HCT116 (cell line): ENCODE measurements at regions of chr6 and their contacts with region 1.

Region 1: DNA sequence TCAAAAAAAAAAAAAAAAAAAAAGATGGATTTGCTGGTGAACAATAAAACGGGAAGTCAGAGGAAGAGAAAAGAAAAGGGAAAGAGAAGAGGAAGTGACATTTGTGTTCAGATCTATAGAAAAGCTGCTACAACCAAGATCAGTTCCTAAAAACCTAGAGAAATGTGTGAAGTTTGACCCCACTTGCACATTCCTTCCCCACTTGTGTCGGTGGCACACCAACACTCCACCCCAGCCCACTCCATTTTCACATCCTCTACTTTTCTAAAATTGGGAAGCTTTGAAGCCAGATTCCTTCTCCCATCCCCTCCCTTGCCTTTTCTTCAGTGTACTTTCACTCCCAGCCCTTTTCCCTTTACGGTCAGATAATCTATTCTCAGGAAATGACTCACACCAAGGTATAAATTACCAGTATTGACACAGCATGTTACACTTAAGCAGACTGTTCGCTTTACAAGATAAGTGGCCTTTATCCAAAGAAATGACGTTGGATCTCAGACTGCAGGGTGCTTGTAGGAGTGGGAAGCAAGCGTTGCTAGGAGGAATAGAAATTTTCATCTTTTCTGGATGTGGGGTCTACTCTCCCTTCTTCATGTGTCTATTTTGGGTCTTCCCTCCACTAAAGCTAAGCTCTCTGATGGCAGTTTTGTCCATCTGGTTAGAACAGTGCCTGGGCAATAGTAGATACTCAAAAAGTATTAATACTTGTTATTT is 92.5 kb upstream of the ADGRF1 start:
- DNase-seq: peak; percentile 88
- ATAC-seq: peak; percentile 82
- H3K4me3 ChIP-seq: peak overlapping the region in 1 of 2 experiments; percentile 30; a peak in 2 of 4 replicates
- H3K27ac ChIP-seq: peak overlapping the region; percentile 48
- H3K4me1 ChIP-seq: peaks cover 44 to 49% of the 10 kb centered on the region in 2 experiments
- H3K27me3 ChIP-seq: no peaks in the 10 kb centered on the region
- CTCF ChIP-seq: no peak
- POLR2A ChIP-seq: no peak
- RAD21 ChIP-seq: no peak; the same call in 1 of the 2 replicates

Region 2: DNA sequence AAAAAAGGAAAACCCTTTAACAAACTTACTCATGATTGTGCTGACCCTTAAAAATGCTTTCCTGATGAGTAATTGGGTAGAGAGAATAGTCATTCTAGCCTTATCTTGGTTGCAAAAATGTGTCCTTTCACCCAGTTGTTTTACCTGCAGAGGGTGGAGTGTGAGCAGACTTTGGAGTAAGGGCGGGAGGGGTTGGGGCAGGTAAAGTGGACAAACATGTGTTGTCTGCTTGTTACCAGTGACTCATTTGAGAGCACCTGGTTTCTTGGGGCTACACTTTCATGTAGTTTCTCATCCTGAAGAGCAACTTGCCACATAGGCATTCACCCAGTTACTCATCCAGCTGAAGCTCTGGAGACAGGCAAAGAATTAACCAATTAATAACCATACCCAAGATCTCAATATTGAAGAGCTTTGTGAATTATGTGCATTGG is 54.0 kb after region 1 on chr6:
- CTCF ChIA-PET with region 1: no interaction called
- POLR2A ChIA-PET with region 1: no interaction called
- RAD21 ChIA-PET with region 1: no interaction called
- intact Hi-C with region 1: loop called (anchors 2 kb)
- DNase-seq: peak; percentile 80
- ATAC-seq: peak; percentile 93
- H3K4me3 ChIP-seq: peak overlapping the region in 1 of 2 experiments; percentile 18; a peak in 1 of 4 replicates
- H3K27ac ChIP-seq: 0 out of 2 replicates have a peak overlapping the region, but pooled peaks have one; percentile 24
- H3K4me1 ChIP-seq: peaks cover 15 to 26% of the 10 kb centered on the region in 2 experiments
- H3K27me3 ChIP-seq: no peaks in the 10 kb centered on the region
- CTCF ChIP-seq: no peak
- POLR2A ChIP-seq: no peak
- RAD21 ChIP-seq: peak; percentile 40